CD8-positive, alpha-beta T cell (primary cell): ENCODE measurements at regions of chr4 and their contacts with region 1.

Region 1: DNA sequence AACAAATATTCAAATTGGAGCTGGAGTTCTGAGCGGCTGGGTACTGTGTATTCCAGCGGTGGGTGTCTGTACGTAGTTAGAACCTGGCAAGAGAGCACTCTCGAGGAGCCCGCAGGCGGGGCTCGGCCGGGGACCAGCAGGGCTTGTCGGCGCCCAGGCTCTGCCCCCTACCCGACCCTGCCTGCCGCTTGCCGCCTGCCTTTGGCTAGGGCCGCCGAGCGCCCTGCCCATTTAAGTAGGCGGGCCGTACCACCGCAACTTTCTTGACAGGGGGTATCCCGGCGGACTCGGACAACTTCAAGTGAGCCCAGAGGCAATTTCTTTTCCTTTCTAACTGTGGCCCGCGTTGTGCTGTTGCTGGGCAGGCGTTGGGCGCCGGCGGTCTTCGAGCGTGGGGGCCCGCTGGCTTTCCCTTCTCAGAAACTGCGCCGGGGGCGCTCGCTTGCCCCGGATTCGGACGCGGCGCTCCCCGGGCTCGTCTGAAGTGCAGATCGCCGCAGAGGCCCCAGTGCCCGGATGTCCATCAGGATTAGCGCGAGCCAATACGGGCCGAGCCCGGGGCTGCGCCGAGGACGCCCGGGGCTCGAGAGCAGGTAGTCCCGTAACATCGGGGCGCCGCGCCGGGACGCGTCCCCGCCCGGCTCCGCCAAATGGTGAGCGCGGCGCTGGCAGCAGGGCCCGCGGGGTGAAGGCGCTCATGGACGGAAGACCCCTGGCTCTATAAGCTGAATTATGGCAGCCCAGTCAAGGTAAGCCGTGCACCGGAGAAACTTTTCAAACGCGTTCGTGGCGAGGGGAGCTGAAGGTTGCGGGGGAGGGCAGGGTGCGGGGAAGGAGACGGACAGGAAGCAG is 72.1 kb downstream of the AFF1 start:
- DNase-seq: peak; percentile 83 to 95 (median 89)
- ATAC-seq: peak; percentile 81
- H3K4me3 ChIP-seq: peak overlapping the region; percentile 75 to 91
- H3K4me3 Mint-ChIP-seq: peak overlapping the region; percentile 91
- H3K27ac ChIP-seq: peak overlapping the region; percentile 83 to 95
- H3K27ac Mint-ChIP-seq: peak overlapping the region; percentile 96
- H3K4me1 ChIP-seq: peaks cover 43% of the 10 kb centered on the region
- H3K4me1 Mint-ChIP-seq: peaks cover 53% of the 10 kb centered on the region
- H3K27me3 ChIP-seq: no peaks in the 10 kb centered on the region
- H3K27me3 Mint-ChIP-seq: no peaks in the 10 kb centered on the region
- CTCF ChIP-seq: no peak

Region 2: DNA sequence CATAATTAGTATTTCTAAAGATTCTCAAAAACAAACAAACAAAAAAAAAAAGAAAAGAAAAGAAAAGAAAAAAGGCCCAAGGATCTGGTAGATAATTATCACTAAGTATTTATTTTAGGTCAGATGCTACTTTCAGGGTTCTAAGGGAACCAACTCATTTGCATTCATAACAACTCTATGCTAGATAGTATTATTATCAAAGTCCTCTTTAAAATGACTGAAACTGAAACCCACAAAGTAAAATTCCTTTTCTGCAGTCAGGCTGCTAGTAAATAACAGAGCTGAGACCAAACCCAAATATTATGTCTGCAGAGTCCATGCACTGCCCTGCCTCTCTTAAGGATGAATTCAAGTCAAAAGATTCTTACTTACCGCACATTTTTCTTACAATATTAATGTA is 608.7 kb before region 1 on chr4:
- CTCF ChIA-PET with region 1: no interaction called
- POLR2A ChIA-PET with region 1: no interaction called
- intact Hi-C with region 1: no loop called
- DNase-seq: no peak
- ATAC-seq: no peak
- H3K4me3 ChIP-seq: no peak overlapping the region
- H3K4me3 Mint-ChIP-seq: no peak overlapping the region
- H3K27ac ChIP-seq: no peak overlapping the region
- H3K27ac Mint-ChIP-seq: no peak overlapping the region
- H3K4me1 ChIP-seq: no peaks in the 10 kb centered on the region
- H3K4me1 Mint-ChIP-seq: no peaks in the 10 kb centered on the region
- H3K27me3 ChIP-seq: no peaks in the 10 kb centered on the region
- H3K27me3 Mint-ChIP-seq: no peaks in the 10 kb centered on the region
- CTCF ChIP-seq: no peak

Region 3: DNA sequence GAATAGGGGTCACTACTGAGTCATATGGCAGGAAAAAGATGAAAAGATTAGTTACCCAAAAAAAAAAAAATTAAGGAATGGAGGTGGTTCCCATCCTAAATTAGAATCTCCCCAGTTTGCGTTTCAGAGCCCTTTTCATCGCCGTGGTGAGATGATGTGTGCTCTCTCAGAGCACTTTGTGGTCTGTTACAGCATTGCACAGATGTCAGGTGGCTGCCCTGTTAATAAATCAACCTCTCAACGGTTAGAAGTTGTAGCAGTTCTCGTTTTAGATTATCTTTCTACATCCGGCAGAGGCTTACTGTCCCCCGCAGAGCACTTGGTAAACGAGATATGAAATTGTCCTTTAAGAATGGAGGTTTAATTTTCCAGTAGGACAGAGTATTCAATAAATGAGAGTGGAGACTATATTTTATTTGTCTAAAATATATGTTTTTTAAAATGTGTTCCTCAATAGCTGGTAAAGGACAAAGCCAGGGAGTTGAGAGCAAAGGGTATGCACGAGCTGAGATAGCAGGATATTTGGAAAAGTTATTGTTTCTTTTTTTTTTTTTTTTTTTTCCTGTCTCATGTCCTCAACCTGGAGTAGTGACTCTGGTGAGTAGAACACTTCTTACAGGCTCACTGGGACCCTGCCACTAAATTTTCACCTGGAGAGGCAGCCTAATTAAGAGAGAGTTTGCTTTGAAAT is 45.2 kb before region 1 on chr4:
- CTCF ChIA-PET with region 1: no interaction called
- POLR2A ChIA-PET with region 1: no interaction called
- intact Hi-C with region 1: no loop called
- DNase-seq: peak in 2 of 9 experiments; percentile 9 to 38
- ATAC-seq: peak; percentile 64
- H3K4me3 ChIP-seq: no peak overlapping the region
- H3K4me3 Mint-ChIP-seq: no peak overlapping the region
- H3K27ac ChIP-seq: no peak overlapping the region
- H3K27ac Mint-ChIP-seq: no peak overlapping the region
- H3K4me1 ChIP-seq: peaks cover 11% of the 10 kb centered on the region
- H3K4me1 Mint-ChIP-seq: peaks cover 34% of the 10 kb centered on the region
- H3K27me3 ChIP-seq: no peaks in the 10 kb centered on the region
- H3K27me3 Mint-ChIP-seq: no peaks in the 10 kb centered on the region
- CTCF ChIP-seq: no peak

Region 4: GRCh38 chr4:87017580-87018342 is 10.9 kb after region 1 on chr4:
- CTCF ChIA-PET with region 1: no interaction called
- POLR2A ChIA-PET with region 1: interaction called, 4 read pairs
- intact Hi-C with region 1: loop called in 1 of 2 experiments (anchors 1 kb)
- DNase-seq: peak in 1 of 9 experiments; percentile 27
- ATAC-seq: peak; percentile 84
- H3K4me3 ChIP-seq: no peak overlapping the region
- H3K4me3 Mint-ChIP-seq: no peak overlapping the region
- H3K27ac ChIP-seq: no peak overlapping the region
- H3K27ac Mint-ChIP-seq: peak overlapping the region; percentile 5
- H3K4me1 ChIP-seq: peaks cover 48% of the 10 kb centered on the region
- H3K4me1 Mint-ChIP-seq: peaks cover 83% of the 10 kb centered on the region
- H3K27me3 ChIP-seq: no peaks in the 10 kb centered on the region
- H3K27me3 Mint-ChIP-seq: no peaks in the 10 kb centered on the region
- CTCF ChIP-seq: no peak

Region 5: GRCh38 chr4:87093443-87094123 is 86.7 kb after region 1 on chr4:
- CTCF ChIA-PET with region 1: interaction called, 7 read pairs
- POLR2A ChIA-PET with region 1: interaction called, 4 read pairs
- intact Hi-C with region 1: loop called (anchors 2 to 5 kb)
- DNase-seq: peak in 8 of 9 experiments; percentile 13 to 69 (median 42)
- ATAC-seq: peak; percentile 92
- H3K4me3 ChIP-seq: no peak overlapping the region
- H3K4me3 Mint-ChIP-seq: no peak overlapping the region
- H3K27ac ChIP-seq: no peak overlapping the region
- H3K27ac Mint-ChIP-seq: peak overlapping the region; percentile 62
- H3K4me1 ChIP-seq: no peaks in the 10 kb centered on the region
- H3K4me1 Mint-ChIP-seq: peaks cover 17% of the 10 kb centered on the region
- H3K27me3 ChIP-seq: no peaks in the 10 kb centered on the region
- H3K27me3 Mint-ChIP-seq: no peaks in the 10 kb centered on the region
- CTCF ChIP-seq: peak; percentile 72

Region 6: GRCh38 chr4:87390891-87391575 is 384.1 kb after region 1 on chr4 and contains the start of gene HSD17B11:
- CTCF ChIA-PET with region 1: interaction called, 3 read pairs
- POLR2A ChIA-PET with region 1: no interaction called
- intact Hi-C with region 1: loop called in 1 of 2 experiments (anchors 10 kb)
- DNase-seq: peak; percentile 65 to 93 (median 84)
- ATAC-seq: peak; percentile 98
- H3K4me3 ChIP-seq: peak within 1 kb of the TSS; percentile 52 to 83
- H3K4me3 Mint-ChIP-seq: peak within 1 kb of the TSS; percentile 98
- H3K27ac ChIP-seq: peak within 1 kb of the TSS; percentile 57 to 84
- H3K27ac Mint-ChIP-seq: peak within 1 kb of the TSS; percentile 91
- H3K4me1 ChIP-seq: peaks cover 29% of the 10 kb centered on the region
- H3K4me1 Mint-ChIP-seq: peaks cover 55% of the 10 kb centered on the region
- H3K27me3 ChIP-seq: no peaks in the 10 kb centered on the region
- H3K27me3 Mint-ChIP-seq: no peaks in the 10 kb centered on the region
- CTCF ChIP-seq: no peak
- total RNA-seq, gene HSD17B11: 38.8 to 42.4 TPM